ENCODE measurements at regions of chr17 and their contacts with region 1.

Region 1: GRCh38 chr17:39676198-39676819 is 8.1 kb downstream of the PNMT start:
- DNase-seq: peak; percentile 74
- H3K4me3 Mint-ChIP-seq: no peak overlapping the region
- H3K27ac Mint-ChIP-seq: peak overlapping the region; percentile 77
- H3K4me1 Mint-ChIP-seq: peaks cover 58% of the 10 kb centered on the region
- H3K27me3 Mint-ChIP-seq: peaks cover 2% of the 10 kb centered on the region

Region 2: GRCh38 chr17:39687811-39688518 is 11.7 kb after region 1 on chr17 and contains the start of gene PGAP3:
- CTCF ChIA-PET with region 1: interaction called, 5 read pairs
- POLR2A ChIA-PET with region 1: interaction called, 71 read pairs
- DNase-seq: peak; percentile 85
- H3K4me3 Mint-ChIP-seq: peak within 1 kb of the TSS; percentile 95
- H3K27ac Mint-ChIP-seq: peak within 1 kb of the TSS; percentile 94
- H3K4me1 Mint-ChIP-seq: peaks cover 28% of the 10 kb centered on the region
- H3K27me3 Mint-ChIP-seq: no peaks in the 10 kb centered on the region
- total RNA-seq, gene PGAP3: 14.0 to 14.2 TPM